ENCODE measurements at regions of chr10 and their contacts with region 1.

Region 1: GRCh38 chr10:52027055-52027705 is 286.9 kb upstream of the DKK1 start:
- DNase-seq: peak; percentile 82
- ATAC-seq: peak; percentile 84
- H3K4me3 ChIP-seq: peak overlapping the region; percentile 27; the same call in 1 of the 2 replicates
- H3K27ac ChIP-seq: peak overlapping the region; percentile 66; the same call in 1 of the 2 replicates
- H3K4me1 ChIP-seq: peaks cover 6% of the 10 kb centered on the region
- H3K27me3 ChIP-seq: no peaks in the 10 kb centered on the region
- CTCF ChIP-seq: no peak
- POLR2A ChIP-seq: no peak
- RAD21 ChIP-seq: no peak

Region 2: GRCh38 chr10:51224671-51225161 is 802.5 kb before region 1 on chr10:
- CTCF ChIA-PET with region 1: interaction called, 11 read pairs
- POLR2A ChIA-PET with region 1: no interaction called
- dilution Hi-C with region 1: no loop called
- in situ Hi-C with region 1: no loop called
- intact Hi-C with region 1: no loop called
- DNase-seq: peak; percentile 88
- ATAC-seq: peak; percentile 88
- H3K4me3 ChIP-seq: no peak overlapping the region
- H3K27ac ChIP-seq: peak overlapping the region; percentile 99; the same call in 1 of the 2 replicates
- H3K4me1 ChIP-seq: peaks cover 9% of the 10 kb centered on the region
- H3K27me3 ChIP-seq: no peaks in the 10 kb centered on the region
- CTCF ChIP-seq: no peak
- POLR2A ChIP-seq: no peak
- RAD21 ChIP-seq: no peak

Region 3: GRCh38 chr10:51907361-51907760 is 119.8 kb before region 1 on chr10:
- CTCF ChIA-PET with region 1: no interaction called
- POLR2A ChIA-PET with region 1: no interaction called
- dilution Hi-C with region 1: no loop called
- in situ Hi-C with region 1: no loop called
- intact Hi-C with region 1: no loop called
- DNase-seq: no peak
- ATAC-seq: no peak
- H3K4me3 ChIP-seq: no peak overlapping the region
- H3K27ac ChIP-seq: no peak overlapping the region
- H3K4me1 ChIP-seq: no peaks in the 10 kb centered on the region; the same call in 1 of the 2 replicates
- H3K27me3 ChIP-seq: no peaks in the 10 kb centered on the region
- CTCF ChIP-seq: no peak
- POLR2A ChIP-seq: no peak
- RAD21 ChIP-seq: no peak

Region 4: GRCh38 chr10:51964630-51965029 is 62.5 kb before region 1 on chr10:
- CTCF ChIA-PET with region 1: no interaction called
- POLR2A ChIA-PET with region 1: no interaction called
- dilution Hi-C with region 1: no loop called
- in situ Hi-C with region 1: no loop called
- intact Hi-C with region 1: no loop called
- DNase-seq: peak; percentile 27
- ATAC-seq: peak; percentile 48; the same call in 1 of the 2 replicates
- H3K4me3 ChIP-seq: no peak overlapping the region
- H3K27ac ChIP-seq: no peak overlapping the region
- H3K4me1 ChIP-seq: no peaks in the 10 kb centered on the region
- H3K27me3 ChIP-seq: no peaks in the 10 kb centered on the region
- CTCF ChIP-seq: no peak
- POLR2A ChIP-seq: no peak
- RAD21 ChIP-seq: no peak

Region 5: GRCh38 chr10:52308251-52309031 is 281.3 kb after region 1 on chr10:
- CTCF ChIA-PET with region 1: no interaction called
- POLR2A ChIA-PET with region 1: no interaction called
- dilution Hi-C with region 1: no loop called
- in situ Hi-C with region 1: no loop called
- intact Hi-C with region 1: no loop called
- DNase-seq: peak; percentile 78
- ATAC-seq: peak; percentile 91
- H3K4me3 ChIP-seq: peak overlapping the region; percentile 53
- H3K27ac ChIP-seq: peak overlapping the region; percentile 51; the same call in 1 of the 2 replicates
- H3K4me1 ChIP-seq: 0 out of 2 replicates have a peak, but pooled peaks cover 3% of the 10 kb centered on the region
- H3K27me3 ChIP-seq: no peaks in the 10 kb centered on the region
- CTCF ChIP-seq: peak; percentile 91
- POLR2A ChIP-seq: peak; percentile 52; the same call in 1 of the 2 replicates
- RAD21 ChIP-seq: peak; percentile 93